ENCODE measurements at regions of chr11 and their contacts with region 1.

Region 1: GRCh38 chr11:14519917-14520746 is at the start of gene PSMA1:
- DNase-seq: peak; percentile 82
- ATAC-seq: peak; percentile 91
- H3K4me3 Mint-ChIP-seq: peak within 1 kb of the TSS; percentile 96
- H3K27ac Mint-ChIP-seq: peak within 1 kb of the TSS; percentile 95
- H3K4me1 Mint-ChIP-seq: peaks cover 27% of the 10 kb centered on the region
- H3K27me3 Mint-ChIP-seq: no peaks in the 10 kb centered on the region
- CTCF ChIP-seq: no peak
- total RNA-seq, gene PSMA1: 184 and 198 TPM in 2 replicates

Region 2: GRCh38 chr11:13668102-13668956 is 851.8 kb before region 1 on chr11 and contains the start of gene FAR1:
- CTCF ChIA-PET with region 1: no interaction called
- POLR2A ChIA-PET with region 1: no interaction called
- intact Hi-C with region 1: loop called (anchors 5 kb)
- DNase-seq: peak; percentile 93
- ATAC-seq: peak; percentile 91
- H3K4me3 Mint-ChIP-seq: peak within 1 kb of the TSS; percentile 99
- H3K27ac Mint-ChIP-seq: peak within 1 kb of the TSS; percentile 95
- H3K4me1 Mint-ChIP-seq: peaks cover 44% of the 10 kb centered on the region
- H3K27me3 Mint-ChIP-seq: peaks cover 7% of the 10 kb centered on the region
- CTCF ChIP-seq: no peak
- total RNA-seq, gene FAR1: 39.2 and 48.4 TPM in 2 replicates

Region 3: DNA sequence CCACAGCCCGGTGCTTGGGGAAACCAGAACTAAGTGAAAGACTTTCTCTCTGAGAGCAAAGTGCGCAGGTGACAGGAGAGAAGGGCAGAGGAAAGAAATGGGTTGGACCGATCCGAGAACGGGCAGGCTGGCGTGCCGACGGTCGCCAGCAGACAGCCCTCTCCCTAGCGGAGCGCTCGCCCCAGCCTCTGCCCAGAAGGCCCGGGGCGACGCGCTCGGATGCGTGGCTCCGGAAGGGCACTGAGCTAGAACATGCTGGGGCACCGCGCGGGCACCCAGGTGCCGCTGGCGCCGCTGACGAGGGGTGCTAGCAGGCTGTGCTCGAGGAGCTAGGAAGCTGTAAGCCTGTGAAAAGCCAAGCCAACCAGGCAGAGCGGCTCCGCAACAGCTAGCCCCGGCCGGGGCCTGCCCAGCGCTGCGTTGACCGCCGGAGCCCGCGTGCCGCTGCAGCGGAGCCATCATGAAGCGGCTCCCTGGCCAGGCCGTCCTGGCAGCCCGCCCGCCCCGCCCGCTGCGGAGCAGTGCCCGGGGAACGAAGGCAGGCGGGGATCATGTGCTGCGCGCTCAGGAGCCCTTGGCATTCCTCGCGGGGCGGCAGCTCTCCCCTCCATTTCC is 139.1 kb before region 1 on chr11:
- CTCF ChIA-PET with region 1: no interaction called
- POLR2A ChIA-PET with region 1: no interaction called
- intact Hi-C with region 1: no loop called
- DNase-seq: peak; percentile 64
- ATAC-seq: peak; percentile 96
- H3K4me3 Mint-ChIP-seq: peak overlapping the region; percentile 83
- H3K27ac Mint-ChIP-seq: peak overlapping the region; percentile 81
- H3K4me1 Mint-ChIP-seq: peaks cover 14% of the 10 kb centered on the region
- H3K27me3 Mint-ChIP-seq: no peaks in the 10 kb centered on the region
- CTCF ChIP-seq: no peak

Region 4: DNA sequence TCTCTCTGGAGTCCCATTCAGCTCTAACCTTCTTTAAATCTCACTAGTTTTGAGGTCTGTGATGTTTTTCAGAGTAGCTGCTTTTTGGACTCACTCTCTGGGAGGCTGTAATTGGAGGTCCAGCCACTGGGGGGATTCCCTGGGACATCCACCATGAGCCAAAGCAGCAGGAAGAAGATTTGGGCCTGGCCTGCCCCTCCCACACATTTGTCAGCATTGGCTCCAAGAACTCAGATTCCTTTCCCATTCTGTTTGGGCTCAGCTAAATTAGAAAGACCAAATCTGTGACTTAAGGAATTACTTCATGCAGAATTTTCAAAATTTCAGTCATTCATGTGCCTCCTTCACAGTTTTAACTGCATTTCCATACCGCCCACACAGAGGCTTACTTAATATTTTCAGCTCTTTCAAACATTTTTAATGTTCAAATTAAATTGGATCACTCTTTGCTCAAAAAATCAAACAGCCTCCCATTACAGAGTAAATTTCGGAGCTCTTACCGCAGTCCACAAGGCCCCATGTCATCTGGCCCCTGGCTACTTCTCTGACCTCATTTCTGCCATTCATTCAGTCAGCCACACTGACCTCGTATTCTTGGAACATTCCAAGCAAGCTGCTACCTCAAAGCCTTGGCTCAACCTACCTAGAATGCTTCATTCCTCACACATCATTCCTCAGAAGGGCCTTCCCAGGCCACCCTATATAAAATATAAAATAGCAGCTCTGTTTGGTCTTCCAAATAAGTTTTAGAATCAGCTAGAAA is 106.6 kb before region 1 on chr11:
- CTCF ChIA-PET with region 1: no interaction called
- POLR2A ChIA-PET with region 1: no interaction called
- intact Hi-C with region 1: no loop called
- DNase-seq: no peak
- ATAC-seq: no peak
- H3K4me3 Mint-ChIP-seq: no peak overlapping the region
- H3K27ac Mint-ChIP-seq: no peak overlapping the region
- H3K4me1 Mint-ChIP-seq: peaks cover 22% of the 10 kb centered on the region
- H3K27me3 Mint-ChIP-seq: no peaks in the 10 kb centered on the region
- CTCF ChIP-seq: no peak

Region 5: DNA sequence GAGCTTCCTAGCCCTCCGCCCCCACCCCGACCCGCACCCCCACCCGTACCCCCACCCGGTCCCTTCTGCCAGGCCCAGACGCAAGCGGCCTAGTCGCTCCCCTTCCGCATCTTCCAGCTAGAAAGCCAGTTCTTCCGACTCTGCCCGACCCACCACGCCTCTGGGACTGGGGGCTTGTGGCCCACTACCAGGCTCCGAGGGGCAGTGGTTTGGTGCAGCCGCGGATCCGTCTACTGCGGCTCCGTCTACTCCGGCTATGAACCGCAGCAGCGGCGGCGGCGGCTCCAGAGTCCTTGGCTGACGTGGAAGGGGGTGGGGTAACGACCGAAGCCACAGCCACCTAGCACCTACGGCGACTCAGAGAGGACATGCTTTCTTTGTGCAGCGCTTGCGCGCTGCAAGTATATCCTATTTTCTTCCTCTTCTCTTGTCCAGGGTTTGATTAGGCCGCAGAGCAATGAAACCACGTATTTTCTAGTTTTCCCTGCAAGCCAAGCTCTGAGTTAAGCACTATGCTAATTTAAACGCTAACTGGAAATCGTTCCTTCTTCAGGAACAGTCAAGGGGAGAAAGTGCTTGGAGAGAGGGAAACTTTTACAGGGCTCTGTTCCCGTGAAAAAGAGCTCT is 20.5 kb before region 1 on chr11 and contains the start of gene COPB1:
- CTCF ChIA-PET with region 1: no interaction called
- POLR2A ChIA-PET with region 1: interaction called, 22 read pairs
- intact Hi-C with region 1: loop called (anchors 1 kb)
- DNase-seq: peak; percentile 81
- ATAC-seq: peak; percentile 95
- H3K4me3 Mint-ChIP-seq: peak within 1 kb of the TSS; percentile 100
- H3K27ac Mint-ChIP-seq: peak within 1 kb of the TSS; percentile 96
- H3K4me1 Mint-ChIP-seq: peaks cover 41% of the 10 kb centered on the region
- H3K27me3 Mint-ChIP-seq: no peaks in the 10 kb centered on the region
- CTCF ChIP-seq: no peak
- total RNA-seq, gene COPB1: 80.7 and 90.1 TPM in 2 replicates

Region 6: DNA sequence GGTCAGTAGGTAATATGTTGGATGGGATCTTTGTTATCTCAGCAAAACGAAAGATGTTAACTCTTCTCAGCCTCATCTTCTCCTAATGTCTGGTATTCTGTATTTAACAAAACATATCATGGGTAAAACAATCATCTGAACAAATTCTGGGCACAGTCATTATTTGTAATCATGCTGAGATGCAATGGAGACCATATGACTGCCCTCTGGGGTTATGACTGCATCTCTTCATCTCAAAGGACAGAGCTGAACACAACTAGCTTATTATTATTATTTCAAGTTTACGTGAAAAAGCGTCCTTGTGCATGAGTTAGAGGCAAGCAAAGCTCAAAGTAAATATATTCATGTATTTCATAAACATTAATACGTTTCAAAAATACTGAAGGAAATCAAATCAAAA is 29.8 kb after region 1 on chr11:
- CTCF ChIA-PET with region 1: no interaction called
- POLR2A ChIA-PET with region 1: no interaction called
- intact Hi-C with region 1: loop called (anchors 1 kb)
- DNase-seq: no peak
- ATAC-seq: no peak
- H3K4me3 Mint-ChIP-seq: no peak overlapping the region
- H3K27ac Mint-ChIP-seq: no peak overlapping the region
- H3K4me1 Mint-ChIP-seq: peaks cover 4% of the 10 kb centered on the region
- H3K27me3 Mint-ChIP-seq: peaks cover 12% of the 10 kb centered on the region
- CTCF ChIP-seq: no peak

Region 7: DNA sequence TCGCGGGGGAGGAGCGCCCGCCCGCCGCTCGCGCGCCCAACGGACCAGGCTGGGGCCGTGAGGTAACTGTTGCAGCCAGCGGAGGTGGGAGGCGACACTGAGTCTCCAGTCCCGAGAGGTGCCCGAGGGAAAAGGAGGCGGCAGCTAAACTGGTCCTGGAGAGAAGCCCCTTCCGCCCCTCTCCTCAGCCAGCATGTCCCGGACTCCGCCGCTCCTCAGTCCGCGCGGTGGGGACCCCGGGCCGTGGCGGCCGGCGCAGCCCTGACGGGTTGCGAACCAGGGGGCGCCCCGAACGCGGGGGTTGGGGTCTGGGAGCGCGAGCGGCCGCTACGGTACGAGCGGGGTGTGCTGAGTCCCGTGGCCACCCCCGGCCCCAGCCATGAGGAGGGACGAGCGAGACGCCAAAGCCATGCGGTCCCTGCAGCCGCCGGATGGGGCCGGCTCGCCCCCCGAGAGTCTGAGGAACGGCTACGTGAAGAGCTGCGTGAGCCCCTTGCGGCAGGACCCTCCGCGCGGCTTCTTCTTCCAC is 123.6 kb after region 1 on chr11 and contains the start of gene PDE3B:
- CTCF ChIA-PET with region 1: no interaction called
- POLR2A ChIA-PET with region 1: no interaction called
- intact Hi-C with region 1: loop called (anchors 1 kb)
- DNase-seq: peak; percentile 56
- ATAC-seq: peak; percentile 72
- H3K4me3 Mint-ChIP-seq: peak within 1 kb of the TSS; percentile 86
- H3K27ac Mint-ChIP-seq: no peak within 1 kb of the TSS
- H3K4me1 Mint-ChIP-seq: peaks cover 10% of the 10 kb centered on the region
- H3K27me3 Mint-ChIP-seq: peaks cover 17% of the 10 kb centered on the region
- CTCF ChIP-seq: no peak
- total RNA-seq, gene PDE3B: 11.3 and 13.4 TPM in 2 replicates

Region 8: DNA sequence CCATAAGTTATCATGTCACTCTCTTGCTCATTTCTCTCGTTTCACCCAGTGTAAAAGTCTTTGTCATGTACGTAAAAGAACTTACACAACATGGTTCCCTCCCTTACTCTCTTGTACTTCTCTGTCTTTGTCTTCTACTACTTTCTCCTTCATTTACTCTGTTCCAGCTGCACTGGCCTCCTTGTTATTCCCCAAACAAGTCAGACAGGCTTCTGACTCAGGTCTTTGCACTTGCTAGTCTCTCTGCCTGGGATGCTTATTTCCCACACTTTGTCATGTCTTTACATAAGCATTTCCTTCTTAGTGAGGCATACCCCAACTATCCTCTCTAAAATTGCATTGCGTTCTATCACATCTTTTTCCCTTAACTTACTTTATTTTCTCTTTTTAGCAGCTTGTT is 254.6 kb after region 1 on chr11:
- CTCF ChIA-PET with region 1: no interaction called
- POLR2A ChIA-PET with region 1: no interaction called
- intact Hi-C with region 1: no loop called
- DNase-seq: no peak
- ATAC-seq: no peak
- H3K4me3 Mint-ChIP-seq: no peak overlapping the region
- H3K27ac Mint-ChIP-seq: no peak overlapping the region
- H3K4me1 Mint-ChIP-seq: peaks cover 11% of the 10 kb centered on the region
- H3K27me3 Mint-ChIP-seq: peaks cover 7% of the 10 kb centered on the region
- CTCF ChIP-seq: no peak

Region 9: DNA sequence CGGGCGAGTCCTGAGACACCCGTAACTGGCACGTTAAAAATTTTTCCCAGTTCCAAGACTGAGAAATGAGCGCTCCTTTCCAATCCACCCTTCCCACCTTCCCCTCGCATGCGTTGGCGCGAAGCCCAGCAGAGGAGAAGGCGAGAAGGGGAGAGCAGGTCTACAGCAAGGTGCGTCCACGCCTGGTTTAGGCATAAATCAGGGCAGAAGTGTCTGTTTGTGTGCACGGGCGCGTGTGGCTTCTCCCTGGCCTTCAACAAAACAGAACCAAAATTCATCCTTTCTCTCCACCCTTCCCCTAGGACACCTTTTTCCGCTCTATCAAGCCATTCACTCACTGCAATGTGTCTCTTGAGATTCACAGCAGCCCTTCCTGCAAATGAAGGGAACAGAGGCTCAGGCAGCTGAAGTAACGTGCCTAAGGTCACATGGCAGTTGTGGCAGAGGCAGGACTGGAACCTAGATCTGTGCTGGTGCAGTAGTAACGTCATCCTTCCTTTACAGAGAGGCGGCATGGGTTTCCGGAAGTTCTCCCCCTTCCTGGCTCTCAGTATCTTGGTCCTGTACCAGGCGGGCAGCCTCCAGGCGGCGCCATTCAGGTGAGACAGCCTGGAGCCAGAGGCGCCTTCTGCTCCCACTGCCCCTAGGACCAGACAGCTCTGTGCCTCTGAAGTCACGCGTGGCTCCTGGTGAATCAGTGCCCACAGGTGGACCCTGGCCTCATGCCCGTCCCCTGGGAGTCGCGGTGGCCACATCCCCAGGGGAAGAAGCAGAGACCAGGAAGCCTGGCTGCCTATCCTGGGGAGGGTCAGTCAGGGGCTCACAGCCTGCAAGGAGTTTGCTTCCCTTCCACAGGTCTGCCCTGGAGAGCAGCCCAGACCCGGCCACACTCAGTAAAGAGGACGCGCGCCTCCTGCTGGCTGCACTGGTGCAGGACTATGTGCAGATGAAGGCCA is 554.4 kb after region 1 on chr11:
- CTCF ChIA-PET with region 1: no interaction called
- POLR2A ChIA-PET with region 1: no interaction called
- intact Hi-C with region 1: loop called (anchors 1 kb)
- DNase-seq: peak; percentile 67
- ATAC-seq: peak; percentile 89
- H3K4me3 Mint-ChIP-seq: peak overlapping the region; percentile 61
- H3K27ac Mint-ChIP-seq: no peak overlapping the region
- H3K4me1 Mint-ChIP-seq: peaks cover 18% of the 10 kb centered on the region
- H3K27me3 Mint-ChIP-seq: peaks cover 34% of the 10 kb centered on the region
- CTCF ChIP-seq: peak; percentile 35